PC-3 (cell line): ENCODE measurements at regions of chr20 and their contacts with region 1.

Region 1: DNA sequence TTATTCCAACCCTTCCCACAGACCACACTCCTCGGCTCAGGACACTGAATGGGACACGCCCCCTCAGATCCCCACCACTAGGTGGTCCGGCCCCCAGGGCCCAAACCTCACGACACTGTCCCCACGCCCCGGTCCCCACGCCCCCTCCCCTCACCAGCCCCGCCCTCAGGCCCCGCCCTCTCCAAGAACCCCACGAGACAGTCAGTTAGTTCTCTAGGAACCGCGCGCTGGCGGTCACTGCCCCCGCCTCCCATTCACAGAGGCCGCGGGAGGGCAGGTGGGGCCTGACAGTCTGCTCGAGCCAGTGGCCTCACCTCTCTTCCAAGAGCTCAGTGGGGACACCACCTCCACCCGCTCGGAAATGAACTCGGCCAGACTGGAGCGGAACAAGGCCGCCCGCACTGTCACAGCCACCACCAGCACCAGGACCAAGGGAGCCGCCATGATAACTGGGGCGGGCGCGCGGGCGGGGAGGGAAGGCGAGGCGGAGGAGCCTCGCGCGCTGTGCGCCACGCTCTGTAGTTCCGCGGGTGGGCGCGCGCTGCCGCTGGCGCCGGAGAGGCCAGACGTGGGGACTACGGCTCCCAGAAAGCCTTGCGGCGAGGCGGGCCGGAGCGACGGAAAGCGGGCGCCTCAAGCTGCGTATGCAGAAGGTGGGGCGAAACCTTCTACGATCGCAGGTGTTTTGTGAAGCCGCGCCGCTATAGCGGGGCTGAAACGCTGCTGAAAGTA is at the start of gene PIGU:
- DNase-seq: peak; percentile 98
- ATAC-seq: peak; percentile 95
- H3K4me3 ChIP-seq: peak within 1 kb of the TSS; percentile 83
- H3K27ac ChIP-seq: peak within 1 kb of the TSS; percentile 79
- H3K4me1 ChIP-seq: peaks cover 13% of the 10 kb centered on the region
- H3K27me3 ChIP-seq: no peaks in the 10 kb centered on the region
- CTCF ChIP-seq: no peak
- total RNA-seq, gene PIGU: 24.5 and 27.9 TPM in 2 replicates

Region 2: DNA sequence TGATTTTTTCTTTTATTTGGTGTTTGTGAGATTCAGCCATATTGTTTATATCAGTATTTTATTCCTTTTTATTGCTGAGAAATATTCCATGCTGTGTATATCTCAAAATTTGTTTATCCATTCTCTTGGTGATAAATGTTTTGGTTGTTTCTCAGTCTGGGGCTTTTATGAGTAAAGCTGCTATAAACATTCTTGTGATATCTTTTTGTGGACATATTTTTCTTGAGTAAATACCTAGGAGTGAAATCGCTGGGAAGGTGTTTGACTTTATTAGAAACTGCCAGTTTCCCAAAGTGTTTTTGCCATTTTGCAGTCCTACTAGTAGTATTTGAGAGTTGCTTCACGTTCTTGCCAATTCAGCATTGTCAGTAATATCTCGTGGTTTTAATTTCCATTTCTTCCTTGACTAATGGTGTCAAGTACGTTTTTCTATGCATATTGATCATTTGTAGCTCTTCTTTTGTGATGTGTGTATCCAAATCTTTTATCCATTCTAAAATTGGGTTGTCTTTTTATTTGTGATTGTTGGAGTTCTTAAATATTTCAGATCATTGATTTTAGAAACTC is 191.7 kb before region 1 on chr20:
- CTCF ChIA-PET with region 1: no interaction called
- POLR2A ChIA-PET with region 1: no interaction called
- intact Hi-C with region 1: no loop called
- DNase-seq: no peak
- ATAC-seq: no peak
- H3K4me3 ChIP-seq: no peak overlapping the region
- H3K27ac ChIP-seq: no peak overlapping the region
- H3K4me1 ChIP-seq: no peaks in the 10 kb centered on the region
- H3K27me3 ChIP-seq: no peaks in the 10 kb centered on the region
- CTCF ChIP-seq: no peak

Region 3: GRCh38 chr20:34629342-34629741 is 47.5 kb before region 1 on chr20:
- CTCF ChIA-PET with region 1: no interaction called
- POLR2A ChIA-PET with region 1: no interaction called
- intact Hi-C with region 1: loop called (anchors 2 kb)
- DNase-seq: no peak
- ATAC-seq: no peak
- H3K4me3 ChIP-seq: no peak overlapping the region
- H3K27ac ChIP-seq: no peak overlapping the region
- H3K4me1 ChIP-seq: peaks cover 16% of the 10 kb centered on the region
- H3K27me3 ChIP-seq: no peaks in the 10 kb centered on the region
- CTCF ChIP-seq: no peak

Region 4: DNA sequence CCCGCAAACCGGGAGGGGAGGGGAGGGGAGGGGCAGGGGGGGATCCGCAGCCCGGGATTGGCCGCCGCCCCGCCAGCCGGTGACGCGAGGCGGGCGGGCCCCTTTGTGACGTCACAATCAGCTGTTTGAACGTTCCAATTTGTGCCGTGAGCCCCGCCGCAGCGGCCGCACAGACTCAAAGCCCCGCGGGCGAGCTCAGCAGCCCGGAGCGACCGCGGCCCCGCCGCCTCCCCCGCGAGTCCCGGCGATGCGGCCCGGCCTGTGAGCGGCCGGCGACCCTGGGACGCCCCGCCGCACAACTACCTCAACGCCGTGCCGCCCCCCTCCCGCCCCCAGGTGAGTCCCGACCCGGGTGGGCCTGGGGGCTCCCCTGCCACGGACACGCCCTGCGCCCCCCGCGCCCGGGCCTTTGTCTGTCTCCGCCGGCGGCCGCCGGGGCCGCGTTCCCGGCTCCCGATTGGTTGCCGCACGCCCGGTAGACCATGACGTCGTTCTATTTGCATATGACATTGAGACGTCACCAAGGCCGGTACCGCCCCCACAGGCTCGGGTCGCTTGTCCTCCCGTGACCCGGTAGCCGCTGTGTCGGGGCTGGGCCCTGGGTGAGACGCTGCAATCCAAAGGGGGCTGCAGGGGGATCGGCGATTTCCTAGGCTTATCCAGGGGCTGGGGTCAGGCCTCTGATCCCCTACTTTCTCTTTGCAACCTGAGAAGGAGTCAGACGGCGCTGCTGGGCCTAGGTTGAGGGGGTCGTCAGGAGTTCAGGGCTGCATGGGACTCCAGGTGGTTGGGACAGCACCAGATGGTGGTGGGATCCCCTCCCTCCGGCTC is 27.6 kb after region 1 on chr20 and contains the start of gene TP53INP2:
- CTCF ChIA-PET with region 1: no interaction called
- POLR2A ChIA-PET with region 1: no interaction called
- intact Hi-C with region 1: loop called (anchors 2 kb)
- DNase-seq: peak; percentile 63
- ATAC-seq: peak; percentile 30
- H3K4me3 ChIP-seq: peak within 1 kb of the TSS; percentile 85
- H3K27ac ChIP-seq: no peak within 1 kb of the TSS
- H3K4me1 ChIP-seq: peaks cover 20% of the 10 kb centered on the region
- H3K27me3 ChIP-seq: no peaks in the 10 kb centered on the region
- CTCF ChIP-seq: no peak
- total RNA-seq, gene TP53INP2: 2.1 and 3.3 TPM in 2 replicates